Psoas muscle (tissue), 8 donors: ENCODE measurements at regions of chr2 and their contacts with region 1.

Region 1: DNA sequence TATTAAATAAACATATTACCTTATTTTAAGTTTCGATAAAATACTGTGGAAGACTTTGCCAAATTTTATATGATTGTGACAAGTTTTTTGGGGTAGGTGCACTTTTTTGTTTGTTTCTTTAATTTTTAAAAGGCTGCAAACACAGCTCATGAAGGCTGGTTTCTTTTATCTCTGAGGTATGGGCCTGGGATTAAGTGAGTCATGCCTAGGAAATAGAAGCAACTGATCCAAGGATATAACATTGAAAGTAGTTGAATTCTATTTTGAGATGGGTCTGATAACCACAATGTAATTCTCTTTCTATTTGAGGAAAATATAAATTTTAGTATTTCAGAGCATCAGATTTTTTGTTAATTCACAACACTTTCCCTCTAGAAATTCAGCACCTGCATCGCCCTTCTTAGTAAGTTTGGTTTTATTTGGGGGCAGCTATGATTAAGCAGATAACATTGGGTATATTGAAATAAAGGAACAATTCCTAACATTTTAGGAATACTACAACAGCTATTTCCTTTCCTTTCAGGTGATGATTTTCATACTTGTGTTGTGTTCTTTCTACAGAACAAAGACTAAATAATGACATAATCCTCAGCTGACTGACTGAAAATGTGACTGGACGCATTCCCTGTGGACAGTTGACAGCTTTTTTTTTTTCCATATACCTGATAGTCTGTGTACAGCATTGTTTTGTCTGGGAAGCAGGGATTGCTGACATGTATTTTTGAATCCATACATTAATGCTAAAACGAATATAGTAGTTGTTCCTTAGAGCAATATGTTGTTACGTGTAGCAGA is 16.8 kb downstream of the RBM45 start:
- DNase-seq: no peak
- ATAC-seq: peak; percentile 42 to 83 (median 62)
- H3K4me3 ChIP-seq: no peak overlapping the region
- H3K27ac ChIP-seq: peak overlapping the region; percentile 40
- H3K4me1 ChIP-seq: peaks cover 11% of the 10 kb centered on the region
- H3K27me3 ChIP-seq: no peaks in the 10 kb centered on the region
- CTCF ChIP-seq: no peak

Region 2: DNA sequence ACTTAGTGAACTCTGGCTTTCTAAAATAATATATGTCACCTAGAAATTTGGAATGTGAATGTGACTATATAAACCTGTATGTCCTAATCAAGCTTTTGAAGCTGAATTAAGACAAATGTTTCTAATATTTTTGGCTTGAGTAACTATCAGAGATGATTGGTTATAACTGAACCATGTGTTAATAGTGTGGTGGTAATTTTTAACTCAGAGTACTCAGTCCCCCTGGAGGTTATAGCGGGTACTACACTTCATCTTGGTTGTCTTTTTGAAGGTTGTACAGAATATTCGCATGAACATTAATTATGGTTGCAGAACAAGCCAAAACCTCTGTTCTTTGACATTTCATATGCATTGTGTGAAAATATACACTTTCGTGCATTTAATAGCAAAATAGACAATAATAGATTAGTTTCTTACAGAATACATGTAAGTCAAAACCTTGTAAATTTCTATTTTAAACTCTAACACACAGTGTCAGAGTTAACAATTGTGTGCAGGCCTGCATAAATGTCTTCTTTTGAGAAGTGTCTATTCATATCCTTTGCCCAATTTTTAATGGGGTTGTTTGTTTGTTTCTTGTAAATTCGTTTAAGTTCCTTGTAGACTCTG is 151.3 kb after region 1 on chr2:
- intact Hi-C with region 1: loop called in 1 of 2 experiments (anchors 5 kb)
- DNase-seq: no peak
- ATAC-seq: peak; percentile 33 to 76 (median 59)
- H3K4me3 ChIP-seq: no peak overlapping the region
- H3K27ac ChIP-seq: no peak overlapping the region
- H3K4me1 ChIP-seq: peaks cover 50% of the 10 kb centered on the region
- H3K27me3 ChIP-seq: no peaks in the 10 kb centered on the region
- CTCF ChIP-seq: peak; percentile 85

Region 3: DNA sequence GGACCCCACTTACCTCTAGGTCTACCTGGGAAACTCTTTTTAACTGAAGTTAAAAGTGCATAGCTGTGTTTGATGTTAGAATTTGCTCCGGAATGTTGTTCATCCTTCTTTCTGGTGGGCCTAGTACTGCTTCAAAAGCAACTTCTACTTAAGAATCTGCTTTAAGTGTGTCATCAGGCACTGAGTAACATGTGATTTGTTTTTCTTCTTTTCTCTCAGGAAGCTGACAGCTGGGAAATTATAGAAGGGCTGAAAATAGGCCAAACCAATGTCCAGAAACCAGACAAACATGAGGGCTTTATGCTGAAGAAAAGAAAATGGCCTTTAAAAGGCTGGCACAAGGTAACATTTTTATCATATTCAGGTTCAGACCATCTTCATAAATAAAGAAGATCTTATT is 199.0 kb after region 1 on chr2:
- intact Hi-C with region 1: no loop called
- DNase-seq: no peak
- ATAC-seq: no peak
- H3K4me3 ChIP-seq: no peak overlapping the region
- H3K27ac ChIP-seq: peak overlapping the region; percentile 1
- H3K4me1 ChIP-seq: peaks cover 34% of the 10 kb centered on the region
- H3K27me3 ChIP-seq: no peaks in the 10 kb centered on the region
- CTCF ChIP-seq: no peak

Region 4: GRCh38 chr2:178574777-178575176 is 445.7 kb after region 1 on chr2:
- intact Hi-C with region 1: no loop called
- DNase-seq: no peak
- ATAC-seq: peak in 2 of 4 donors; percentile 10 to 11
- H3K4me3 ChIP-seq: no peak overlapping the region
- H3K27ac ChIP-seq: peak overlapping the region; percentile 50
- H3K4me1 ChIP-seq: peaks cover 30% of the 10 kb centered on the region
- H3K27me3 ChIP-seq: no peaks in the 10 kb centered on the region
- CTCF ChIP-seq: no peak